ENCODE measurements at regions of chr4 and their contacts with region 1.

Region 1: DNA sequence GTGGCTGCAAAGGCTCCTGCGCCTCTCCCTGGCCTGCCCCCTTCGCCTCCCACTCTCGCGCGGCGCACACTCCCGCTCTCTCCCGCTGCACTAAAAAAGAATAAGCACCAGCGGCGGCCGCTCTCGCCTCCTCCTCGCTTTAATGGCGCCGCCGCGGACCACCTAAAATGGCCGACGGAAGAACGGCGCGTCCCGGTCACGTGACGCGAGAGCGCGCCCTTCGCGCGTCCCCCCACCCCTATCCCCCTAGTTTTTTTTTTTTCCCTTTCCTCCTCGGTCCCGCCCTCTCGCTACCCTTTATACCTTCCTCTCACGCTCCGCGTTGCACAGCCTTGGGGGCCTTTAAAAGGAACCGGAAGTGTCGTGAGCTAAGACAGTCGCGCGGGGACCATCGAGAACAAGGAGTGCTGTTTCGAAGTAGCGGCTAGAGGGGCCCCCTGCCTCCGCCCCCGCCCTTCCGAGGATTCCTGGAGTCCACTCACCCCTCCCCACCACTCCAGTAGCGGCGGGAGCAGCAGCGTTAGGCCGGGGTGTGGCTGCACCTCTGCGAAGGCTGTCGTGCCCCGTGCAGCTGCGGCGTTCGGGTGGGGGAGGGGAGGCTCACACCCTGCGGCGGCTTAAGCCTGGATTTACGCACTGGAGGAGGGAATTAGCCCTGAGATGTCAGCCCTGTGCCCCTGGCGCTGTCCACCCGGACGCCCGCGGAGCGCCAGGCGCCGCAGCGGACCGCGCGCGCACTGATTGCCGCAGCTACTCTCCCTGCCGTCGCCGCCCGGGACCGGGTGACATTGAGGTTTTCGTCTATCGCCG is at the start of gene HNRNPD:
- DNase-seq: peak; percentile 98 to 99
- ATAC-seq: peak; percentile 90 to 95 (median 92)
- H3K4me3 ChIP-seq: peak within 1 kb of the TSS; percentile 84
- H3K27ac ChIP-seq: peak within 1 kb of the TSS; percentile 95
- H3K4me1 ChIP-seq: peaks cover 32% of the 10 kb centered on the region
- H3K27me3 ChIP-seq: no peaks in the 10 kb centered on the region
- CTCF ChIP-seq: no peak
- total RNA-seq, gene HNRNPD: 82.0 to 139 (median 115) TPM

Region 2: DNA sequence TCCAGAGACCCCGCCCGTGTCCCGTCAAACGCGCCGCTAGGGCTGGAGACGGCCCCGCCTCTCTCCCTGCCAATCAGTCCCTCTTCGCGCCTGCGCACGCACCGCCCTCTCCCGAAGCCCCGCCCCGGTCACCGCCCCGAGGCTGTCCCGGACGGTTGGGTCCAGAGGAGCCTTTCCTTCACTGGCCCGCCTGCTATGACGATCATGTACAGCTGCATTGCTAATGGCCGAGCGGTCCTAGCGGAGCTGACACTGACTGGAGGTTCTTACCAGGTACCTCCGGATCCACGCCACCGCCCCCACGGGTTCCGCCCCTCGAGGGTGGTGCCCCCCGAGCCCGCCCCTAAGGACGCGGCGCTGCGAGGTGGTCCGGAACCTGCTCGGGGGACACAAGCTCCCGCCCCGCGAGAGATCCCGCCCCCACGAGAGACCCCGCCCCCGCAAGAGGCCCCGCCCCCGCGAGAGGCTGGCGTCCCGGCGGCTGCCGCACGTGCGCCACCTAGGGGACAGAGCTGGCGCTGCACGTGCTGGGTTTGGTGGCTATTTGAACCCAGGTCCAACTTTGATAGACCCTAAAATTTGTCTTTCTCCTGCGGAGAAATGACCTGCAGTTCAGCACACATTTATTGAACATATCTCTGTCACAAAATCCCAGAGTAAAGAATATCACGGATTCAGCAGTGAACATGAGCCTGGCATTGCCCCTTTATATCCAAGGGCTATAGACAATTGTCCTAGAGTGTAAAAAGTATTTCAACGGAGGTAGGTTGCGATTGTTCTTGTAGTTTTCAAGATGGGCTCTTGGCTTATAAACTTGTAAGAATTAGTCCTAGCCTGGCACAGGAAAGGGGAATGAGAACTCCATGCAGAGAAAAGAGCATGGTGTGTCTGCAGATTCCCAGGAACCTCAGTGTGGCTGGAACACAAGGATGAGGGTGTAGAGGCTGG is 88.9 kb before region 1 on chr4:
- intact Hi-C with region 1: loop called in 1 of 2 experiments (anchors 5 kb)
- DNase-seq: peak; percentile 98 to 100
- ATAC-seq: peak; percentile 99 to 100 (median 99)
- H3K4me3 ChIP-seq: peak overlapping the region; percentile 68
- H3K27ac ChIP-seq: peak overlapping the region; percentile 71
- H3K4me1 ChIP-seq: no peaks in the 10 kb centered on the region
- H3K27me3 ChIP-seq: no peaks in the 10 kb centered on the region
- CTCF ChIP-seq: peak; percentile 89

Region 3: DNA sequence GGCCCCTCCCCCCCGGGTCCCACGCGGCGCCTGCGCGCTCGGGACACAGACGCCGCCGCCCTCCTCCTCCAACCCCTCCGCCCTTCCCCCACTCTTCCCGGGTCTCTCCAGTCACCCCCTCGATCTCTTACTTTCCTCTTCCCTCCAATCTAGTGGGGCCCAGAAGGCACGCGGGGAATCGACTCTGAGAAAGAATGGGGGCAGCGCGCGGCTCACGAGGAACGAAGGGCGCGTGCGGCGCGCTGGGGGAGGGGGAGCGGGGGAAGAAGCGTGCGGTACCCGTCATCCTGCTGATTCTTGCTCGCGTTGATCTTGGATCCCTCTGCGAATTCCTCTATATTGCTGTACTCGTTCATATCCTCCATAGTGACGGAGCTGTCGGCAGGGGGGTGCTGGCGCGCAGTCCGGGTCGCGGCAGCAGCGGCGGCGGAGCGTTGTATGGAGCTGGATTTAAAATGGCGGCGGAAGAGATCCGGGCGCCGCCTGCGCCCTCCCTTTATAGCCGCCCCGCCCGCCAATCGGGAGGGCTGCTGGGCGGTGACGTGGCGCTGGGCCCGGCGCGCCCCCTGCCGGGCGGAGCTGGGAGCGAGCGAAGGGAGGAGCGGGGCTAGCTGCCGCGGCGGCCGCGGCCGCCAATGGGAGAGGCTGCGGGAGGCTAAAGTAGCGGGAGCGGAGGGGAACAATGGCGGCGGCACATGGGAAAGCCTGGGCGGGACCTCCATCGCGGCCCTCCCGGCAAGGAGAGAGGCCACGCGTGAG is 55.1 kb after region 1 on chr4:
- intact Hi-C with region 1: loop called (anchors 1 to 2 kb)
- DNase-seq: peak; percentile 93 to 97
- ATAC-seq: peak; percentile 86 to 87 (median 86)
- H3K4me3 ChIP-seq: peak overlapping the region; percentile 81
- H3K27ac ChIP-seq: peak overlapping the region; percentile 99
- H3K4me1 ChIP-seq: peaks cover 28% of the 10 kb centered on the region
- H3K27me3 ChIP-seq: no peaks in the 10 kb centered on the region
- CTCF ChIP-seq: peak; percentile 96

Region 4: DNA sequence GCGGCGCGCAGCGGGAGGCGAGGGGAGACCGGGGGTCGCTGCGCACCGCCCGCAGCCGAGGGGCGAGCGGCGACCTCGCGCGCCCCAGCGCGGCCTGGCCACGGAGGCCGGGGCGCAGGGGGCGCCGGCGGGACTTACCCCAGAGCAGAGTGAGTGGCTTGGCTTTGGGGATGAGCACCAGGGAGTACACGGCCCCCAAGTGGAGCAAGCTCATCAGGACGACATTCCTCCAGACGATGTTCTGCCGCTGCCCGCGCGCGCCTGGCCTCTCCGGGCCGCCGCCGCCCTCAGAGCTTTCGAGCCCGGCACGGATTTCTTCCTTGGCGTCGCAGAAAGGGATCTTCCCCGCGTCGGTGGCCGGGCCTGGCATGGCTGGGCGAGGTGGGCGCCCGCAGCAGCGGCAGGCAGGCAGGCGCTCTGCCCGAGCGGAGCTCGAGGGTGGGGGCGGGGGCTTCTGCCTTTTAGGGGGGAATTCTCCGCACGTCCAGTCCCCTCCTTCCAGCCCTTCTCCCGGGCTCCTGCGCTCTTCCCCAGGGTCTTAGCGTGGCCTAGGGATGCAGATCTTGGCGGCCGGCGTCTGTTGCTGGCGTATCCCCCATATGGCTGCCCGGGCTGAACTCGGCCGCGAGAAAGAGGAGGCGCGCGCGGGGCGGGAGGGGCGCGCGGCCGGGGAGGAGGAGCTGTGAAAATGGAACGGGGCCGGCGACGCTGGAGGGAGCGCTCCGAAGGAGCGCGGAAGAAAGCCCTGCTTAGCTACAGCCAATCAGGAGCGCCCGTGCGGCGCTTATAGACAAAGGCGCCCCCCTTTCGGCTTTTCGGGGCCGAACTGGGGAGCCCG is 424.4 kb after region 1 on chr4 and contains the start of gene SCD5:
- intact Hi-C with region 1: no loop called
- DNase-seq: peak; percentile 61 to 67
- ATAC-seq: peak; percentile 61 to 85 (median 76)
- H3K4me3 ChIP-seq: peak within 1 kb of the TSS; percentile 72
- H3K27ac ChIP-seq: no peak within 1 kb of the TSS
- H3K4me1 ChIP-seq: no peaks in the 10 kb centered on the region
- H3K27me3 ChIP-seq: peaks cover 3 to 36% (median 4%) of the 10 kb centered on the region in 3 donors
- CTCF ChIP-seq: no peak
- total RNA-seq, gene SCD5: 0.61 to 1.6 (median 0.68) TPM

Region 5: DNA sequence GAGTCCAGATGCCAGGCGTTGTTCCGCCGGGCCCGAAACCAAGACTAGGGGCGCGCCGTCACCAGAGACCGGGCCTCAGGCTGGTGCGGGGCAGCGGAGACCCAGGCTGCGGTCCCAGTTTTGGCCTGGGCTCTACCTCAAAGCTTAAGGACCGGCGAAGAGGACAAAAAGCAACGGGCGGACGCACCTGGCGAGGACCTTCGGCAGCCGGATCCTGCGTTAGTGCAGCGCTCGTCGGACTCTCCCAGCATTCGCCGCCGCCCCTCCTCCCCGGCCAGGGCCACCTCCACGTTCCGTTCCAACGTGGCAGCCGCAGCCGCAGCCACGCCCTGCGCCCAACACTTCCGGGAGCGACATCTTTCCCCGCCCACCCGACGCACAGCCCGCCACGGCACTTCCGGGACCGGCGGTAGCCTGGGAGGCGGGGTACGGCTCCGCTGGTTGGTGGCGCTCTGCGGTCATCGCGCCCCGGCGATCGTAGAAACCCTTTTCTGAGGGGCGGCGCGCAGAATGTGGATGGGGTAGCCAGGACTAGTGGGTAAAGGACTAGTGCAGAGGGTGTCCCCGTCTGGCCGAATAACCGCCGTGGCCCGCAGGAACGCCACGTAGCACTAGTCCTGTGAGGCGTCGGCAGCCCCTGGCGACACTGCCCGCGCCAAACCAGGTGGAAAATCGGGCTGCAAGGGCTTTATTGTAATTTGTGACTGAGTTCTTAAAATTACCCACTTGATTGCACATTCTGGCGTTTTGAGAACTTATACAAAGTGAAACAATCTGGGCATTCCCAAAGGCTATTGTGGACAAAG is 517.1 kb after region 1 on chr4 and contains the start of gene SEC31A:
- intact Hi-C with region 1: loop called in 1 of 2 experiments (anchors 10 kb)
- DNase-seq: peak; percentile 96 to 98
- ATAC-seq: peak; percentile 97 to 99 (median 98)
- H3K4me3 ChIP-seq: peak within 1 kb of the TSS; percentile 66
- H3K27ac ChIP-seq: peak within 1 kb of the TSS; percentile 86
- H3K4me1 ChIP-seq: peaks cover 31% of the 10 kb centered on the region
- H3K27me3 ChIP-seq: no peaks in the 10 kb centered on the region
- CTCF ChIP-seq: no peak
- total RNA-seq, gene SEC31A: 94.6 to 117 (median 106) TPM

Region 6: DNA sequence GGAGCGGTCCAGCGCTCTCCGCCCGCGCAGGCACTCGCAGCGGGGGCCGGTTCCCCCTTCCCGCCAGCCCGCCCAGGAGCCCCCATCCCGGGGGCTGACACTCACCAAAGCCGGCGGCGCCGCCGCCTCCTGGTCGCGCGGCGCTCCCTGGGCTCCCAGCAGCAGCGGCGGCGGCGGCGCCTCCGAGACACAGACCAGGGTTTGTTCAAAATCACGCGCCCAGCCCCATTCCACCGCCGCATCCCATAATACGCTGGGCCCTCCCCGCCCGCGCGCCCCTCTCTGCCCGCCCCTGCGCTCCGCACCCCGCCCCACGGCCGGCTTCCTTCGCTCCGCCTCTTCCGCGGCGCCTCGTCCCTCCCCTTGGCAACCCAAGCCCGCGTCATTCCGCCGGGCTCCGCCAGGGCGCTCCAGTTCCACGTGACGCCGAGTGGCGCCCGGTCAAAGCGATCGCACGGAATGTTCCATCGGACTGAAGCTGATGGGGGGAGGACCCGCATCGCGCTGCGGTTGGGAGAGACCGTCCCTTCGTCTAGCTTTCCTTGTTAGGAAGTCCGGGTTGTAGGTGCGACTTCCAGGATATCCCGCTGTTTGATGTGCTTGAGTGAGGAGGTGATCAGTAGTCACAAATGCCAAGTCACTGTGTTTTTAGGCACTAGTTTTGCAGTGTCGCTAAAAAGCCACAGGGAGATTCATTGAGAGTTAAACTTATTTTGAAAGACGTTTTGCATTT is 638.8 kb after region 1 on chr4:
- intact Hi-C with region 1: loop called in 1 of 2 experiments (anchors 10 kb)
- DNase-seq: peak; percentile 97 to 99
- ATAC-seq: peak; percentile 95 to 98 (median 97)
- H3K4me3 ChIP-seq: peak overlapping the region; percentile 87
- H3K27ac ChIP-seq: peak overlapping the region; percentile 83
- H3K4me1 ChIP-seq: peaks cover 22% of the 10 kb centered on the region
- H3K27me3 ChIP-seq: no peaks in the 10 kb centered on the region
- CTCF ChIP-seq: peak; percentile 45

Region 7: GRCh38 chr4:83034630-83035494 is 660.8 kb after region 1 on chr4 and contains the start of gene COPS4:
- intact Hi-C with region 1: loop called in 1 of 2 experiments (anchors 10 kb)
- DNase-seq: peak; percentile 96 to 98
- ATAC-seq: peak; percentile 98 to 100 (median 100)
- H3K4me3 ChIP-seq: peak within 1 kb of the TSS; percentile 92
- H3K27ac ChIP-seq: peak within 1 kb of the TSS; percentile 92
- H3K4me1 ChIP-seq: peaks cover 21% of the 10 kb centered on the region
- H3K27me3 ChIP-seq: no peaks in the 10 kb centered on the region
- CTCF ChIP-seq: peak; percentile 34
- total RNA-seq, gene COPS4: 51.2 to 71.7 (median 65.8) TPM

Region 8: GRCh38 chr4:83455281-83456129 is 1081.5 kb after region 1 on chr4 and contains the starts of genes HELQ and MRPS18C:
- intact Hi-C with region 1: loop called in 1 of 2 experiments (anchors 10 kb)
- DNase-seq: peak; percentile 95 to 97
- ATAC-seq: peak; percentile 99
- H3K4me3 ChIP-seq: peak within 1 kb of the TSS; percentile 83
- H3K27ac ChIP-seq: peak within 1 kb of the TSS; percentile 96
- H3K4me1 ChIP-seq: peaks cover 16% of the 10 kb centered on the region
- H3K27me3 ChIP-seq: no peaks in the 10 kb centered on the region
- CTCF ChIP-seq: peak; percentile 21
- total RNA-seq, gene HELQ: 14.1 to 19.1 (median 17.3) TPM
- total RNA-seq, gene MRPS18C: 38.2 to 60.1 (median 46.1) TPM

Measured in psoas muscle (tissue), 8 donors.